K562 (cell line): ENCODE measurements at regions of chr7 and their contacts with region 1.

Region 1: GRCh38 chr7:89857767-89858166 is 296.5 kb upstream of the STEAP1 start:
- DNase-seq: no peak
- ATAC-seq: no peak
- H3K4me3 ChIP-seq: no peak overlapping the region
- H3K27ac ChIP-seq: no peak overlapping the region
- H3K4me1 ChIP-seq: no peaks in the 10 kb centered on the region
- H3K27me3 ChIP-seq: no peaks in the 10 kb centered on the region
- CTCF ChIP-seq: no peak
- EP300 ChIP-seq: no peak
- POLR2A ChIP-seq: no peak
- RAD21 ChIP-seq: no peak

Region 2: DNA sequence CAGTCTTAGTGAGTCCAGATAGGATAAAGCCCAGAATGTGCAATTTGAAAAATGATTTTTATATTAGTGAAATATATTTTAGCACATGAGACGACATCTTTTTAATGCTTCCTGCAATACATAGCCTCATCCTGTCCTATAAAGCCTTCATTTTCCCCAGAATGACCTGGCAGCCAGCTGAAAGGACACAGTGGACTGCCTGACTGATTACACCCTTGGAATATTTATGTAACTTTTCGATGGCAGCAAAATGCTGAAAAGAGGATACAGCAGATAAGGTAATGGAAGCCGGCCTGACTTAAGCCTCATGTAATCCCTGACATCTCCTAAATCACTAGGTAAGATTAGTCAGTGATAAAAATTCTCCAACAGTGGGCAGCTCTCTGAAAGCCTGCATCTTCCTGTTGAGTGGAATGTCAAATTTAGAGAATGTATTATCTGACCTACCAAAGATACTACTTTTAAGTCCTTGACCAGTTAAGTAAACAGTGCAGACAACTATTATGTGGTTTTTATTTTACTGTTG is 85.8 kb after region 1 on chr7:
- CTCF ChIA-PET with region 1: no interaction called
- POLR2A ChIA-PET with region 1: no interaction called
- in situ Hi-C with region 1: no loop called
- intact Hi-C with region 1: loop called (anchors 5 kb)
- DNase-seq: no peak
- ATAC-seq: no peak
- H3K4me3 ChIP-seq: no peak overlapping the region
- H3K27ac ChIP-seq: no peak overlapping the region
- H3K4me1 ChIP-seq: no peaks in the 10 kb centered on the region
- H3K27me3 ChIP-seq: no peaks in the 10 kb centered on the region
- CTCF ChIP-seq: no peak
- EP300 ChIP-seq: no peak
- POLR2A ChIP-seq: no peak
- RAD21 ChIP-seq: no peak